ENCODE measurements at regions of chr3 and their contacts with region 1.

Region 1: GRCh38 chr3:196073188-196073838 is 8.6 kb downstream of the TFRC start:
- DNase-seq: peak; percentile 75
- H3K4me3 ChIP-seq: no peak overlapping the region
- H3K27ac ChIP-seq: no peak overlapping the region
- H3K4me1 ChIP-seq: no peaks in the 10 kb centered on the region
- H3K27me3 ChIP-seq: no peaks in the 10 kb centered on the region
- CTCF ChIP-seq: peak; percentile 87

Region 2: DNA sequence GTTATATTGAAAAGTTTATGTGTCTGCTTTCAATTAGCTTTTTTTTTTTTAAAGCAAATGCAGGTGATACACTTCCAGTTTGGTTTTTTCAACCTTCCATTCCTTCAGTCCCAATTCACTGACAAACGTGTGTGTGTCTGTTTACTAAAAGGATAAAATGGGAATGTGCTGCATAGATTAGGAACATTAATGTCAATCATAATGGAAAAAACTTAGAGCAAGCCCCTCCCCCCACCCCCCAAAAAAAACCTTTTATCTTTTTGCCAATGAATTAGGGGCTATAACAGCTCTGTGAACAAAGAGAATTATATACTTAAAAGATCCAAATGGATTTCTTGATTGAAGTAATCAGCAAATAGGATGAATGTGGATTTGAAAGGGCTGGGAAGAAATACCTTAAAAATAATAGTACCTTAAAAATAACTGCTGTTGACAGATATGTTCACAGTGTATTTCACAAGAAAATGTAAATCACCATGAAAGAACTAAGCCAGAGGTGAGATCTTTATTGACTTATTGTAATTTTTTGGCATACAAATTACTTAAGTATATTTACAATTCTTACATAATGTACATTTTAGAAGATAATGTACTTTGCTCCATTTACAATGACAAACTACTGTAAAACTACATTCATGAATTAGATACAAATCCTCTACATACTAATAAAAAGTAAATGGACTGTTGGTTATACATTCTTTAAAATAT is 798.9 kb before region 1 on chr3:
- CTCF ChIA-PET with region 1: no interaction called
- POLR2A ChIA-PET with region 1: no interaction called
- intact Hi-C with region 1: no loop called
- DNase-seq: no peak
- H3K4me3 ChIP-seq: no peak overlapping the region
- H3K27ac ChIP-seq: no peak overlapping the region
- H3K4me1 ChIP-seq: peaks cover 12% of the 10 kb centered on the region
- H3K27me3 ChIP-seq: no peaks in the 10 kb centered on the region
- CTCF ChIP-seq: no peak

Region 3: DNA sequence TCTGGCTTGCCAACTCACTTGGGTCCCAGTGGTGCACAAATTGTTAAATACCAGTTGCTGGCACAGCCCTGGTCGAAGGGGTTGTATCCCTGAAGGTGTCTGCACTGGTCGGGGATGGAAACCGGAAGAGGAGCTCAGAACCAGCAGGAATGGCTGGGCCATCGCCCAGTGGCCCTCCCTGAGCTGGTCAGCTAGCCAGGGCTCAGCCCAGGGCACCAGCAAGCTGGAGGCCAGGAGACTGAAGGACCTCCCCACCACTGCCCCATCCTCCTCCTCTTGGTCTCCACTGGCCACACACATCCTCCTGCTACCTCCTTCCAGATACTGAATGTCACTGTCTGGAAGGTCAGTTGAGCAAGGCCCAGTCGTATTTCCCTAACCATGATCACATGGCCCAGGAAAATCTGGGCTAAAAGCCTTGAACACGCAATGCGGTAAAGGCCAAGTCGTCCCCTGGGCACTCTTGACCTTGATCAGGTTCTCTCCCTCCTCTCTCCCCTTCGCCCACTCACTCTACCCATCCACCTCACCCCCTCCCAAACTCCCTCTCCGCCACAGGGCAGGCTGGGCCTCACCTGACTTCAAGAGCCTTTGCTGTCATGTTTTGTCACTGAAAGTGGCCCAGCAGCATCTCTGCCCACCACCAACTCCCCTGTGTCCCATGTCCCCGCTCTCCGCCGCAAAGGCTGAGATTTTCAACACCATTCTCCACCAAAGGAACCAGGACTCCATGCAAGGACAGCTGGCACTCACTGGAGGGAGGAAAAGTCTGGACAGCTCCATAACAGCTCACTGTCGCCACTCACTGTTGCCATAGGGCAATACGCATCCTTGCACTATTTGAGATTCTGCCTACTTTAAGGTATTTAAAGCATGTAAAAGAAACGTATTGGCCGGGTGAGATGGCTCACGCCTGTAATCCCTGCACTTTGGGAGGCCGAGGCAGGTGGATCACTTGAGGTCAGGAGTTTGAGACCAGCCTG is 125.7 kb after region 1 on chr3:
- CTCF ChIA-PET with region 1: interaction called, 4 read pairs
- POLR2A ChIA-PET with region 1: no interaction called
- intact Hi-C with region 1: loop called (anchors 1 kb)
- DNase-seq: peak; percentile 34
- H3K4me3 ChIP-seq: no peak overlapping the region
- H3K27ac ChIP-seq: no peak overlapping the region
- H3K4me1 ChIP-seq: no peaks in the 10 kb centered on the region
- H3K27me3 ChIP-seq: no peaks in the 10 kb centered on the region
- CTCF ChIP-seq: peak; percentile 40; the same call in 1 of the 2 replicates

Region 4: DNA sequence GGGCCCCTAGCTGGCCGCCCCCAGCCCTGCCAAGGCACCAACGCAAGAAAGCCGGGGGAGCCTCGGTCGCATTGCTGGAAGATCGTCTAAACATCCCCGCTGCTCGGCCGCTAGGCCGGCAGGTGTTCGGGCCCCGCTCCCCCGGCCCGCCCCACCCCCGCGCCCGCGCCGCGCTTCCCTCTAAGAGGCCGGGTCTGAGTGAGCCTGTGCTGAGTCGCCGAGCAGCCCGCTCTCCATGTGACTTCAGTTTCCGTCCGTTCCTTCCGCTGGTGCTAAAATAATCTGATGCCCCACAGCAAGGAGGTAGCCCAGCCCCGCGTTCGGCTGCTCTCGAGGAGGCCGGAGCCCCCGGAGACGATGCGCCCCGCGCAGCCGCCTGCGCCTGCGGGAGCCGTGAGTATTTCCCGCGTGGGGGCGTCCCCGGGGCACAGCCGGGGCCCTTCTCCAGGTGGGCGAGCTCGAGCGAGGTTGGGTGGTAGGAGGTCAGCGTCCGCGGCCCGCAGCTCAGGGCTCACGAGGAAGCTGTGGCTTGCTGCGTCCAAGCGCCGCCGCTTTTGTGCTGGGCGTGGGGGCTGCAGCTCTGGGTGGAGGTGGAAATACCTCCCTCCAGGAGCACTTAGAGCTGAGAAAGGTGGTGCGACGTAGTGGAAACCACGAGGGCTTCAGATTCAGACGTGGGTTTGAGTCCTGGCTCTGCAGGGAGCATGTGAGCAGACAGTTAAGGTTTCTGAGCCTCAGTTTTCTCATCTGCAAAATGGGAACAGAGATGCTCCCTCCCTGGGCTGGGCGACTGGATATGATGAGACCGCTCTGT is 566.4 kb after region 1 on chr3 and contains the start of gene NRROS:
- CTCF ChIA-PET with region 1: no interaction called
- POLR2A ChIA-PET with region 1: interaction called, 22 read pairs
- intact Hi-C with region 1: no loop called
- DNase-seq: peak; percentile 55
- H3K4me3 ChIP-seq: peak within 1 kb of the TSS; percentile 47
- H3K27ac ChIP-seq: no peak within 1 kb of the TSS
- H3K4me1 ChIP-seq: no peaks in the 10 kb centered on the region
- H3K27me3 ChIP-seq: no peaks in the 10 kb centered on the region
- CTCF ChIP-seq: no peak
- total RNA-seq, gene NRROS: 0.64 and 0.92 TPM in 2 replicates